ENCODE measurements at regions of chr4 and their contacts with region 1.

Region 1: DNA sequence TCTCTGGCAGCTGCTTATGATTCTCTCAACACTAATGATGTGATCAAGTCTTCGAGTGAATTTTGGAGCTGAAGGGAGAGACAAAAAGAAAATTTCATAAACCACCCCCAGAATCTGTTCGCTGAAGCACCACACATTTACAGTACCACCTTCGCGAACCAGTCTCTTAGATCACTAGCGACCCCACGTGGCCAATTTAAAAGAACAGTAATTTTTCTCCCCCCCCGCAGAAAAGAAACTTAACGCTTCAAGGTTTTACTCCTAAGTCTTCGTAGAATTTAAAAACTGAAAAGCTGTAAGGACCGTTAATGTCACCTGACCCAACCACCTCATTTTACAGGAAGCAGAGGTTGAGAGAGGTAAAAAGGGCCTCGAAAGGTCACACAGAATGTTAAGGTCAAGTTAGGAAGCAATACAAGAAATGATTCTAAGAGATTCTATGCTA is 187.5 kb downstream of the QDPR start:
- DNase-seq: peak; percentile 62
- H3K4me3 ChIP-seq: no peak overlapping the region
- H3K27ac ChIP-seq: peak overlapping the region; percentile 34
- H3K27me3 ChIP-seq: no peaks in the 10 kb centered on the region
- CTCF ChIP-seq: peak; percentile 80

Region 2: DNA sequence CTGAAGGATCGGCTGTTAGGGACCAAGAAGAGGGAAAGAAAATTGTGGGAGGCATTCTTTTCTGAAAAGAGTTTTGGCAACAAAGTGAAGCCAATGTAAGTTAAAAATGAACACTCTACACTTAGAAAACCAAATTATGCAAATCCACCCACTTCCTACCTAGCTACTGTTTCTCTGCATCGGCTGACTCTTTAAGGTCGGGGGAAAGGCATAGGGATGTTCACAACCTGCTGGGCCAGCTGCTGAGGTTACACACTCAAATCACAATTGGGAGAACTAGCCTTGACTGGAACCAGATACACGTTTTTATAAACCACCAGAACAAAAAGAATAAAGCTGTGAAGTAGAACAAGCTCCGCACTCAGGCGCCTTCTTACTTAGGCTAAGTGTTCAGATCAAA is 591.7 kb before region 1 on chr4:
- CTCF ChIA-PET with region 1: interaction called, 10 read pairs
- POLR2A ChIA-PET with region 1: no interaction called
- DNase-seq: no peak
- H3K4me3 ChIP-seq: no peak overlapping the region
- H3K27ac ChIP-seq: no peak overlapping the region
- H3K27me3 ChIP-seq: no peaks in the 10 kb centered on the region
- CTCF ChIP-seq: no peak

Region 3: GRCh38 chr4:16820329-16820728 is 504.1 kb before region 1 on chr4:
- CTCF ChIA-PET with region 1: interaction called, 14 read pairs
- POLR2A ChIA-PET with region 1: no interaction called
- DNase-seq: no peak
- H3K4me3 ChIP-seq: no peak overlapping the region
- H3K27ac ChIP-seq: no peak overlapping the region
- H3K27me3 ChIP-seq: no peaks in the 10 kb centered on the region
- CTCF ChIP-seq: no peak

Region 4: GRCh38 chr4:16875487-16875886 is 448.9 kb before region 1 on chr4:
- CTCF ChIA-PET with region 1: interaction called, 12 read pairs
- POLR2A ChIA-PET with region 1: interaction called, 3 read pairs
- DNase-seq: peak; percentile 68
- H3K4me3 ChIP-seq: no peak overlapping the region
- H3K27ac ChIP-seq: no peak overlapping the region
- H3K27me3 ChIP-seq: no peaks in the 10 kb centered on the region
- CTCF ChIP-seq: no peak

Region 5: DNA sequence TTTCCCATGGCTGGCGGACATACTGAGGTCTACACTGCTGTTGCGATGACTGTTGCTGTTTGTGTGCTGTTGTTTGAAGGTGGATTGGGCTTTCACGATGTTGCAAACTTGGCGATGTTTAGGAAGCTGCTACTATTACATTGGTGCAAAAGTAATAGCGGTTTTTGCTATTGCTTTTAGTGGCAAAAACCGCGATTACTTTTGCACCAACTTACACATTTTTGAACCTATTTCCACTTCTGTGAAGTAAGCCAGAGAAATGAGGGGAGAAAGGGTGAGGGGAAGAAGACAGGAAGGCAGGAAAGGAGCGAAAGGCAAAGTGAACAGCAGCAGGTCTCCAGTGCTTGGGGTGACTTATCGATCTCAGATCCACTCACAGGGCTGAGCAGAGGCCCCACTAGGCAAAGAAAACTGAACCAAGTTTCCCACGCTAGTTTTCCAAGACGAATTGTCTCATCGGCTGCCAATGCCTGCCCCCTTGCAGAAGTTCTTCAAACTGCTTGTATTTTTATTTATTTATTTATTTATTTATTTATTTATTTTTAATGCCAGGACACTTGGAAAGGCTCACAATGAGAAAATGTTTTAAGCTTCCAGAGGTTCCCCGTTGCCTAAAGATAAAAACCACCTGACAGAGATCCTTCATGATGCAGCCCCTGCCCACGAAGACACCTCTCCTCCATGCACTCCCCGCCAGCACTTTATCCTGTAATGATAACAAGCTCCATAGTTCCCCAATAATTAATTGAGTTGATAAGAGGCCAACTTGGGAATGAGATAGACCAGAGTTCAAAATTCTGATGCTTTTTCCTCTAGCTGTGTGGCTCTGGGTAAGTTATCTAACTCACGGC is 144.2 kb after region 1 on chr4:
- CTCF ChIA-PET with region 1: interaction called, 13 read pairs
- POLR2A ChIA-PET with region 1: no interaction called
- DNase-seq: no peak
- H3K4me3 ChIP-seq: no peak overlapping the region
- H3K27ac ChIP-seq: no peak overlapping the region
- H3K27me3 ChIP-seq: no peaks in the 10 kb centered on the region
- CTCF ChIP-seq: peak; percentile 67

Region 6: GRCh38 chr4:17535906-17536305 is 211.5 kb after region 1 on chr4:
- CTCF ChIA-PET with region 1: no interaction called
- POLR2A ChIA-PET with region 1: no interaction called
- DNase-seq: no peak
- H3K4me3 ChIP-seq: no peak overlapping the region
- H3K27ac ChIP-seq: no peak overlapping the region
- H3K27me3 ChIP-seq: peaks cover 10% of the 10 kb centered on the region
- CTCF ChIP-seq: no peak